A673 (cell line): ENCODE measurements at regions of chr20 and their contacts with region 1.

Region 1: GRCh38 chr20:51639206-51639832 is 96.8 kb upstream of the NFATC2 start:
- DNase-seq: peak; percentile 83
- H3K4me3 ChIP-seq: no peak overlapping the region
- H3K27ac ChIP-seq: peak overlapping the region; percentile 19
- H3K4me1 ChIP-seq: peaks cover 65% of the 10 kb centered on the region
- H3K27me3 ChIP-seq: no peaks in the 10 kb centered on the region
- CTCF ChIP-seq: peak; percentile 95

Region 2: GRCh38 chr20:51434580-51435247 is 204.6 kb before region 1 on chr20:
- CTCF ChIA-PET with region 1: no interaction called
- POLR2A ChIA-PET with region 1: no interaction called
- intact Hi-C with region 1: no loop called
- DNase-seq: peak; percentile 68
- H3K4me3 ChIP-seq: no peak overlapping the region
- H3K27ac ChIP-seq: peak overlapping the region; percentile 41
- H3K4me1 ChIP-seq: peaks cover 12% of the 10 kb centered on the region
- H3K27me3 ChIP-seq: no peaks in the 10 kb centered on the region
- CTCF ChIP-seq: no peak

Region 3: DNA sequence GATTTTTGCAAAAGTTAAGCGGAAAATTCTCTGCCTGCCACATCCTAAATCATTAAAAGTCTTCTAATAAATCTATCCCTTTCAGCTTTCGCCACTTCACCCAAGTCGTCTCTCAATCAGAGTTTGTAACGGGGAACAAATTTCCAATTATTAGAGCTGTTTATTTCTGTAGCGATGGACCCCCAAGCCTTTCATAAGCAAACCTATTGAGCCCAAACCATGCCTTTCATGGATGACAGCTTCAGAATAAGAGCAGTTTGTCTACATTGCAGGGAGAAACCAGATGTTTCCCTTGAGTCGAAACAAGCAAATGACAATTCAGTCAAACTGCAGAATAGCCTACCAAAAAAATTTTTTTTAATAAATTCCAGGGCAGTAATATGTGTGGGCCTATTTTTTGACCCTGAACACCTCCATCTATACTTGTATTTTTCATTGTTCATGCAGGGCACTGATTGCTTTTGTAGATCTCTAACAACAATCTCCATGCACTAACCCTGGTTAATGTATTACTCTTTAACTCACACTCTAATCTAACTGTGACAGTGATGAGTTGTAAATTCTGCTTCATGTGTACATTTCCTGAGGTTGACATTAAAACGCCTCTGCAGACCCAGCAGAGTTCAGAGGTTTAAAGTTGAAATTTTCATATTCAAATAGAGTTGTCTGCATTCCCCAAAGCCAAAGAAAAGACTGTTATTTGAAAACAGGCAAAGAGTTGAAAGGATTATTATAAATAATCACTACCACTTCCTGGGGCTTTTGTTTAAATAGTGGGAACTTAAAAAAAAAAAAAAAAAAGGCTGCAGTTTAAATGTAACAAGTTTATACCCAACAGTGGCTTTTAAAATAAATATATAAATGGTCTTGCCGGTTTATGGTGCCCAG is 64.3 kb after region 1 on chr20:
- CTCF ChIA-PET with region 1: interaction called, 6 read pairs
- POLR2A ChIA-PET with region 1: no interaction called
- intact Hi-C with region 1: loop called (anchors 5 kb)
- DNase-seq: peak; percentile 87
- H3K4me3 ChIP-seq: no peak overlapping the region
- H3K27ac ChIP-seq: peak overlapping the region; percentile 46
- H3K4me1 ChIP-seq: peaks cover 56% of the 10 kb centered on the region
- H3K27me3 ChIP-seq: no peaks in the 10 kb centered on the region
- CTCF ChIP-seq: no peak

Region 4: DNA sequence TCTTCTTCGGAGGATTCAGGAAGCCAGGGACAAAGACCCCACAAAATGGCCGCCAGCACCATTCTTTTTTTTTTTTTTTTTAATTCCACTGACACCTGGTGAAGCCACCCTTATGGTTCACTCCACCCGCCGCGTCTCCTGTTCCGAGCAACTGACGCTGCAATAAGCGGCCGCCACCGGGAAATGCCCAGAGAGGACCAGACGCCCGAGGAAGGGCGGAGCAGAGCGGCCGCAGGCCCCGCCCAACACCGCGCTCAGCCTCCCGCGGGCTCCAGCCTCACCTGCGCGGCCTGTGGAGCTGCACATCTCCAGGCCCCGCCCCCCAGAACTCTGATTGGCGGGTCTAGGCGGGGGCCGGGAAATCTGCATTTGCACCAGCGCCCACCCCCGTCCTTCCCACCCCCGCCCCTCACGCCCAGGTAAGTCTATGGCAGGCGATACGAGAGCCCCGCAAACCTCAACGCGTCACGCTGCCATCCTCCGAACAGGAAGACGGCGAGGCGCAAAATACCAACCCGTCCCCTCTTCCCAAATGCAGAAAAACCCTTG is 127.8 kb after region 1 on chr20:
- CTCF ChIA-PET with region 1: interaction called, 4 read pairs
- POLR2A ChIA-PET with region 1: no interaction called
- intact Hi-C with region 1: loop called (anchors 10 kb)
- DNase-seq: peak; percentile 58
- H3K4me3 ChIP-seq: peak overlapping the region; percentile 91
- H3K27ac ChIP-seq: peak overlapping the region; percentile 65
- H3K4me1 ChIP-seq: peaks cover 9% of the 10 kb centered on the region
- H3K27me3 ChIP-seq: no peaks in the 10 kb centered on the region
- CTCF ChIP-seq: no peak

Region 5: DNA sequence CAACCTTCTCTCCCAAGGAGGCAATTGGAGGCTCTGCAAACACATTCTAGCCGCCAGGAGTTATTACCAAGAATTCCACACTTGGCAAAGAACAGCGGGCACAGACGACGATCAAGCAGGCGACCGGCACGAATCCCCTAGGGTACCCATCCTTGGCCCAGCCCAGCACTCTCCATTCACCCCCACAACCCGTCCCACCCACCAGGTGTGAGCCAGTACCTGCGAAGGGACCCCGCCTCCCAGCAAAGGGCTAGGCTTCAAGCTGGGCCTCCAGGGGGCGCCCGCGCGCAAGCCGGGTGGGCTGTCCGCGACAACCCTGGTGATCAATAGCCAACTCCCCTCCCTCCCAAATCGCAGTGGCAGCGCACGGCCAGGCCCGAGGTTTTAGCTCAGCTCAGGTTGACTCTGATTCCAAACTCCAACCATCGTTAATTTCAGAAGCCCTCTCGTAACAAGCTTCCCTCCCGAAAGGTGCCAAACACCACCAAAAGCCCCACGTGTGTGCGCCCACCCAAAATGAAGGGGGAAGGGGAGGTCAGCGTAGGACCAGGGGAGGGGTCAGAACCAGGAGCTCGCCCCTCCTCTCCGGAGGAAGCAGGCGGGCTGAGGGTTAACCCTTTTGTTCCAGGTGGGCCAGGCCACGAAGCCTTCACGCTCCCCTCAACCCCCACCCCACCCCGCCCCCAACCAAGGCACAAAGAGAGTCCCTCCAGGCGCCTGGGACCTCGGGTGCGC is 160.9 kb after region 1 on chr20:
- CTCF ChIA-PET with region 1: no interaction called
- POLR2A ChIA-PET with region 1: no interaction called
- intact Hi-C with region 1: loop called (anchors 2 kb)
- DNase-seq: peak; percentile 82
- H3K4me3 ChIP-seq: peak overlapping the region; percentile 74
- H3K27ac ChIP-seq: peak overlapping the region; percentile 89
- H3K4me1 ChIP-seq: peaks cover 40% of the 10 kb centered on the region
- H3K27me3 ChIP-seq: no peaks in the 10 kb centered on the region
- CTCF ChIP-seq: peak; percentile 99

Region 6: GRCh38 chr20:51861726-51862466 is 222.6 kb after region 1 on chr20:
- CTCF ChIA-PET with region 1: no interaction called
- POLR2A ChIA-PET with region 1: interaction called, 11 read pairs
- intact Hi-C with region 1: no loop called
- DNase-seq: no peak
- H3K4me3 ChIP-seq: no peak overlapping the region
- H3K27ac ChIP-seq: no peak overlapping the region
- H3K4me1 ChIP-seq: peaks cover 7% of the 10 kb centered on the region
- H3K27me3 ChIP-seq: no peaks in the 10 kb centered on the region
- CTCF ChIP-seq: no peak

Region 7: DNA sequence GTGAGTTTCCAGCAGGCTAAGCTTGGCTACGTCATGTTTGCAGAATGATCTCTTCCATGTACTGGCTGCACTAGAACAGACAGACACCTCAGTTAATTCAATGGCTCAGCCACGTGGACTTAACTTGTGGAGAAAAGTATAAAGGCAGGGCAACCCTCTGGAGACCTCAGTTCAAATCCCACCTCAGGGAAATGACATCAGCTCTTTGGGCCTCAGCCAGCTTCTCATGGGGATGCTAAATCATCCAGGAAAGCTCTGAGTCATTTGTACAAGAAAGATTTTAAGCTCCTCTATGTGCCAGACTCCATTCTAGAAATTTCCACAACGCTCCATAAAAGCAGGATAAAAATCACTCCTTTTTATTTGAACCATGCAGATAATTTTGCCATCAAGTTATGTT is 291.5 kb after region 1 on chr20:
- CTCF ChIA-PET with region 1: no interaction called
- POLR2A ChIA-PET with region 1: no interaction called
- intact Hi-C with region 1: loop called (anchors 10 kb)
- DNase-seq: peak; percentile 92
- H3K4me3 ChIP-seq: no peak overlapping the region
- H3K27ac ChIP-seq: peak overlapping the region; percentile 1
- H3K4me1 ChIP-seq: peaks cover 51% of the 10 kb centered on the region
- H3K27me3 ChIP-seq: no peaks in the 10 kb centered on the region
- CTCF ChIP-seq: no peak

Region 8: DNA sequence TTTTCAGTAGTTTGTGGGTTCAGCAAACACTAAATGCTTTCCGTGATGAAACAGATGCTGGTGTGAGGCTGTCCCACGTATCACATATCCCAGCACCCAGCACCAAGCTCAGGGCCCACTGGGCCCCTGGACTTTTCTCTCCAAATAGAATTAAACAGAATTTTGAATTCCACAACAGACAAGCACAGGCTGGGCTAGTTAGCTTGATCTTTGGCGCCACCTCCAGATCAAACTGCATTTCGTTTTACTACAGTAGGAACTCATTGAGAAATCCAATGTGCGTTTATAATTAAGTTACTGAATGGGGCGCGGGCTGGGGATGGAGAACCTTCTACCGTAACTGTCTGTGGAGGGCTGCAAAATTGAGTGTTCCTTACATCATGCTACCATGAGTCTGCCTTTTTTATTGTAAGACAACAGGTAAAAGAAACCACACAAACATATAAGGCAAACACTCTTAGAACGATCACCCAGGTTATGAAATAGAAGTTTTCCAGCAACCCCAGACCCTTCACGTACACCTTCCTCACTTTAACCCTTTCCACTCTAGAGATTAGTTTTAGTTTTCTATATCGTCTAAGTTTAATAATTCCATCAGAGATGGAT is 444.4 kb after region 1 on chr20:
- CTCF ChIA-PET with region 1: interaction called, 7 read pairs
- POLR2A ChIA-PET with region 1: no interaction called
- intact Hi-C with region 1: loop called (anchors 2 kb)
- DNase-seq: peak; percentile 86
- H3K4me3 ChIP-seq: no peak overlapping the region
- H3K27ac ChIP-seq: no peak overlapping the region
- H3K4me1 ChIP-seq: peaks cover 20% of the 10 kb centered on the region
- H3K27me3 ChIP-seq: no peaks in the 10 kb centered on the region
- CTCF ChIP-seq: peak; percentile 85